Activated CD4-positive, alpha-beta memory T cell treated with anti-CD3 and anti-CD28 coated beads for 36 hours (primary cell): ENCODE measurements at regions of chr1 and their contacts with region 1.

Region 1: GRCh38 chr1:114757455-114758250 is at the start of gene CSDE1:
- DNase-seq: peak; percentile 98
- H3K4me3 Mint-ChIP-seq: peak within 1 kb of the TSS; percentile 98
- H3K27ac Mint-ChIP-seq: peak within 1 kb of the TSS; percentile 100
- H3K4me1 Mint-ChIP-seq: peaks cover 47% of the 10 kb centered on the region
- H3K27me3 Mint-ChIP-seq: no peaks in the 10 kb centered on the region
- total RNA-seq, gene CSDE1: 452 to 464 TPM

Region 2: DNA sequence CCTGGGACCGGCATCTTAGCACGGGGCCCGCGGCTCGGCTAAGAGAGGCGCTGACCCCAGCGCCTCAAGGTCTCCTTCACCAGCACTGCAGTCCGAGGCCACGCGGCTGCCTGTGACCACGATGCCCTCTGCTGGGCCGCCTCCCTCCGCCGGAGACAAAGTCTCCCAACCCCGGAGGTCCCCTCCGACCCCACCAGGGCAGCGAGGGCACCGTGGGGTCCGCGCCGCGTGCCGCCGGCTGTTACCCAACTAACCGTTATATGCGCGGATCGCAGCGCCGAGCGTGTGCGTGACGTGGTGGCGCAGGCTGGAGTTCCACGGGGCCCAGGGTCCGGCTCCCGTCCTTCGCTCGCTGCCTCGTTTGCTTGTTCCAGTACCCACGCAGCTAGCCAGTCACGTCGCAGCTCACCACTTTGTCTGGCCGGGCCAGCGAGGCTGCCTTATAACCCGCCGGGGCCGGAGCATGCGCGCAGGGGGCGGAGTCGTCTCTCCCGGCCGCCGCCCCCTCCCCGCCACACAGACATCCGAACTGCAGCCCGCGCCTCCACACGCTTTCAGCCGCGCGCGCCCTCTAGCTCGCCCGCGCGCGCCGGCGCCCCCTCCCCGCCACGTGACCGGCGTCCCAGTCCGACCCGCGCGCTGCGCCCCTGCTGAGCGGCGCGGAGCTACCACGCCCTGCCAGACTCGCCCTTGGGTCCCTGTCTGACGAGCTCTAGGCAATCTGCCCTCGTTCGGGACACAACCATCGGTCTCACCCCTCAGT is 1801.7 kb before region 1 on chr1 and contains the start of gene SLC16A1:
- CTCF ChIA-PET with region 1: no interaction called
- POLR2A ChIA-PET with region 1: no interaction called
- intact Hi-C with region 1: loop called (anchors 5 kb)
- DNase-seq: peak; percentile 92
- H3K4me3 Mint-ChIP-seq: peak within 1 kb of the TSS; percentile 98
- H3K27ac Mint-ChIP-seq: peak within 1 kb of the TSS; percentile 97
- H3K4me1 Mint-ChIP-seq: peaks cover 58% of the 10 kb centered on the region
- H3K27me3 Mint-ChIP-seq: no peaks in the 10 kb centered on the region
- total RNA-seq, gene SLC16A1: 48.7 to 53.3 TPM

Region 3: DNA sequence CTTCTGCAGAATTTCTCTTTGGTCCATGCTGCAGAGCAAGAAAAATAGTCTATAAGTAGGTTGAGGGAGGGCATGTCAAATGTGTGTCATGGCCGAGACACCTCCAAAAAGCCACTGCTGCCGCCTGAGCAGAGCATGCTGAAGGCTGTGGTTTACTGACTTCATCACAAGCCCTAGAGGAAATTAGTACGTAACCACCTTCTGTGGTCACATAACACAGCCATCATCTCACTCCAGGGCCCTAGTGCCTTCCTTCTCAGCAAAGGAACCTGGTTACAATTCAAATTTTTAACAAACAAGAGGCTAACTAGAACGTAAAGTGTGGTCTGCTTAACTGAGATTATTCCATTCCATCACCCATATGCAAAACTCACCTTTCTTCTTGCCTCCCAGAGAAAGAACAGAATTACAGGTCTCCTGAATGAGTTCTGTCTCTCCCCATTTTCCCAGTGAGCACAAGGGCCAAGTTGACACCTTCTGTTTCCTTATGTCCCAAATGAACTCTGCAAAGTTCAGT is 886.0 kb before region 1 on chr1 and contains the start of gene PTPN22:
- CTCF ChIA-PET with region 1: no interaction called
- POLR2A ChIA-PET with region 1: no interaction called
- intact Hi-C with region 1: loop called (anchors 5 kb)
- DNase-seq: peak; percentile 89
- H3K4me3 Mint-ChIP-seq: peak within 1 kb of the TSS; percentile 80
- H3K27ac Mint-ChIP-seq: peak within 1 kb of the TSS; percentile 97
- H3K4me1 Mint-ChIP-seq: peaks cover 75% of the 10 kb centered on the region
- H3K27me3 Mint-ChIP-seq: no peaks in the 10 kb centered on the region
- total RNA-seq, gene PTPN22: 45.2 to 45.7 TPM

Region 4: DNA sequence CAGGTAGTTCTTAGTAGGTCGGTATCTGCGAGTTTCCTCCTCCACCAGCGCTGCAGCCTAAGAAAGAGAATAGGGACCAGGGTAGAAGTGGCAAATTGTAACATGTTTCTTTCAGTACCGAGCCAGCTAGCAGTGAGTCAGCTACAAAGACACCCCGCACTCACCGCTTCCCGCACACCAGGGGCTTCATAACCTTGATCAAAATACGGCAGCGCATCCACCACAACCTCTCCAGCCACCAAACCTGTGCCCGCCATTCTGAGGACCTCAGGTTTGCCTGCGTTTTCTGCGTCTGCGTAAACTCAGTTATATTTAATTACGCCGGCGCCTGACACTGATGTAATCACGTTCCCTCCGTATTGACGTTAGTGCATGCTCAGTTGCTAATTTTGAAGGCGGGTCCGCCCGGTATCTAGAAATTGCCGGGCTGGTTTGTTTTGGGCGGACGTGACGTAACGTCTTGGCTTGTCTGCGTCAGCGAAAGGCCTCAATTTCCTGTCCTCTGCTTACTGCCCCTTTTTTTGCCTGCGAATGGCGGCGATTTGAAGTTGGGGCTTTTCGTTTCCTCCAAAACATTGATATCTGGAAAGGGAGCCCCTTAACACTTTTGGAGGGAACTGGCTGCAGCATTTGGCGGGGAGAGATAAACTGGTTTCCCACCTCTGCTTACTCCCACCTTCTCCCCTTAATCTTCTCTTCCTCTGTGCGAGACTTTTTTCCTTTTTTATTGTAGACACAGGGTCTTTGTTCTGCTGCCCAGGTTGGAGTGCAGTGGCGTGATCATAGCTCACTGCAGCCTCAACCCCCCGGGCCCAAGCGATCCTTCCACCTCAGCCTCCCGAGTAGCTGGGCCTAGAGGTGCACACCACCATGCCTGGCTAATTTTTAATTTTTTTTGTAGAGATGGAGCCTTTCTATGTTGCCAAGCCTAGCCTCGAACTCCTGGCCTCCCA is 176.0 kb before region 1 on chr1 and contains the start of gene BCAS2:
- CTCF ChIA-PET with region 1: no interaction called
- POLR2A ChIA-PET with region 1: no interaction called
- intact Hi-C with region 1: loop called (anchors 1 kb)
- DNase-seq: peak; percentile 98
- H3K4me3 Mint-ChIP-seq: peak within 1 kb of the TSS; percentile 85
- H3K27ac Mint-ChIP-seq: peak within 1 kb of the TSS; percentile 83
- H3K4me1 Mint-ChIP-seq: peaks cover 29% of the 10 kb centered on the region
- H3K27me3 Mint-ChIP-seq: no peaks in the 10 kb centered on the region
- total RNA-seq, gene BCAS2: 48.5 to 49.0 TPM

Region 5: DNA sequence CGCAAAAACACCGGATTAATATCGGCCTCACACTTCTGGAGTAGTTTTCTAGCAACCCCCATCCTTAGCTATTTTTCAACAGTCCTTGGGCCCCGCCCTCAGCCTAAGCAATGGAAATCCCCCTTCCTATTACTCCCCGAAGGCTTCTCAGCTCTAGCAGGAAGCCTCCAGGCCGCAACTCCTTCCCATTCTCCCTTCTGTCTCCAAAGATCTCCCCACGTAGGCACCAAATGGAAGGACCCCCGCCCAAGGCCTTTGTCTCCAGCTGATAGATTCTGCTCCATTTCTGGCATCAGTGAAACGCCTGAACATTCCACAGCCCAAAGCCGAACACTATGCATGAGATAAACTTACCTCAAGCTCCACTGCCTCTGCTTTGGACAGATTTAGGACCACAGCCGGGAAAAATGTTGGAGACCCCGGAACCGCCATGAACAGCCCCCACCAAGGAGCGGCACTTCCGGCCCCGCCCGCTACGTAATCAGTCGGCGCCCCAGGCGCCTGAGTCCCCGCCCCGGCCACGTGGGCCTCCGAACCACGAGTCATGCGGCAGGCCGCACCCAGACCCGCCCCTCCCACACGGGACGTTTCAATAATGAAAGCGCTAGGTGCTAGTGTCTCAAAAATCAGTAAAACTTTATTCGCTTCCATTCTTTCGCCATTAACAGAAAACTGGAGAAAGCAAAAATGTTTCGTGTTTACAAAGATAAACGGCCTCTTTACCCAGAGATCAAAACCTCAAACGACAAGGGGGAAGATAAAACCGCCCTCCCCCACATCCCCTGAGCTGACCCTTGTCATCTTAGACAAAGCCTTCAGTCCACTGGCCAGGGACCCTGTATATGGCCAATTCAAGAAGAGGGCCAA is 41.1 kb before region 1 on chr1 and contains the start of gene NRAS:
- CTCF ChIA-PET with region 1: interaction called, 5 read pairs
- POLR2A ChIA-PET with region 1: interaction called, 8 read pairs
- intact Hi-C with region 1: loop called (anchors 1 kb)
- DNase-seq: peak; percentile 97
- H3K4me3 Mint-ChIP-seq: peak within 1 kb of the TSS; percentile 91
- H3K27ac Mint-ChIP-seq: peak within 1 kb of the TSS; percentile 97
- H3K4me1 Mint-ChIP-seq: peaks cover 31% of the 10 kb centered on the region
- H3K27me3 Mint-ChIP-seq: no peaks in the 10 kb centered on the region
- total RNA-seq, gene NRAS: 51.7 to 52.1 TPM

Region 6: DNA sequence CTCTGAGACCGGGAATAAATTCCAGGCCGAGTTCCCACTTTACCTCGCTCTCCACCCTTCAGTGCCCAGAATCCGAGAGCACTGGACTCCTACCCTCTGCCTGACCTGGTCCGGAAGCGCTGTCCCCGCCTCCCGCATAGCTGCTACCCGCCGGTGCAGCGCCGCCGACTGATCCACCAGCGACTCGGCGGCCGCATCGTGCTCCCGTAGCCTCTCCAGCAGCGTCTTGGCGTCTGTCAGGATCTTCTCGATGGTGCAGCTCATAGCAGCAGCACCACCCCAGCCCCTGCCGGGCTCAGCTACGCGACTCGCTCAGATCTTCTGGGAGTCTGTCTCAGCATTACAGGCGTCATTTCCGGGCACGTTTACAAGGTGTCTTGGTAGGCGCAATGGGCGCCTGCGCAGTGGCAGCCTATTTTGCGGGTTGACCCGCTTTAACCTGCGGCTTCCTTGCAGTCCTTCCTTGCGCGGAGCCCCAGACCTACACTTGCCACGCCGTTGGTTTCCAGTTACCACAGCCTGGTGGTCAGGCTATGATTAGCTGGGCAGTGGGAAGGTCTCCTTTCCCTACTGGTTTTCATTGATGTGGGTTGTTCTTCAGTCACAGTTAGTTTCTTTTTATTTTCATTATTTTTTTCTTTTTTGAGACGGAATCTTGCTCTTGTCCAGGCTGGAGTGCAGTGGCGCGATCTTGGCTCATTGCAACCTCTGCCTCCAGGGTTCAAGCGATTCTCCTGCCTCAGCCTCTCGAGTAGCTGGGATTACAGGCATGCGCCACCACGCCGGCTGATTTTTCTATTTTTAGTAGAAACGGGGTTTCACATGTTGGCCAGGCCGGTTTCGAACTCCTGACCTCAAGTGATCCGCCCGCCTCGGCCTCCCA is 22.9 kb after region 1 on chr1 and contains the start of gene SIKE1:
- CTCF ChIA-PET with region 1: no interaction called
- POLR2A ChIA-PET with region 1: interaction called, 4 read pairs
- intact Hi-C with region 1: loop called (anchors 1 kb)
- DNase-seq: peak; percentile 97
- H3K4me3 Mint-ChIP-seq: peak within 1 kb of the TSS; percentile 100
- H3K27ac Mint-ChIP-seq: peak within 1 kb of the TSS; percentile 100
- H3K4me1 Mint-ChIP-seq: peaks cover 23% of the 10 kb centered on the region
- H3K27me3 Mint-ChIP-seq: no peaks in the 10 kb centered on the region
- total RNA-seq, gene SIKE1: 60.4 to 66.7 TPM

Region 7: DNA sequence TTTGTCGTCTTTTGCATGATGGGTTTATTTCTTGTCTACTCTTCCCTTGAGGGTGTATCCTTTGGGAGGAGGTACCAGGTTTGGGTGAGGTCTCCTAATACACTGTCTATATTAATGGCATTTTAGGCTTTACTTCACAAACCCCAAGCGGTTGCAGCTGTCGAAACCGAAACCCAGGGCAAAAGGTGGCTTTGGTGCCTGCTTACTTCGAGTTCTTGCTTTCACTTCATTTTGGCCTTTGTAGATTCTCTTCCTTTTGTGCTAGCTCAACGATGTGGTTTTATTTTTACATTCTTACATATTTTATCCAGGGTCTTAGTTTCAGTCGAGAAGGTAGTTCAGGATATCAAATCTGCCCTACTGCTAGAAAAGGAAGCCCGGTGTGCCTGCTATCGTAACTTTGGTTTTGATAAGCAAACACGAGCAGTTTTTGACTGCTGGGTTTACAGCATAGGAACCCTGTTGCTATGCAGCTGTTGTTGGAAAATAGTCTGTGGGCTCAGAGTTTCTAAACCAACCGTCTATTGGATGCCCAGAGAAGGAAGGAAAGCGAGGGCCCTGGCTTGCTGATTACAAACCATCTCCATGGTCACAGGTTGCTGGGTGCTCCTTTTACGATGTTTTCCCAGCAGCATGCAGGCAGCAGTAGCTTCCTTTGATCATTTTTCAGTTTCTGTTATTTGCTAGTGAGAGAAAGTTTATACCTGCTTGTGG is 341.5 kb after region 1 on chr1:
- CTCF ChIA-PET with region 1: no interaction called
- POLR2A ChIA-PET with region 1: no interaction called
- intact Hi-C with region 1: loop called (anchors 1 kb)
- DNase-seq: peak; percentile 78
- H3K4me3 Mint-ChIP-seq: peak overlapping the region; percentile 80
- H3K27ac Mint-ChIP-seq: peak overlapping the region; percentile 85
- H3K4me1 Mint-ChIP-seq: peaks cover 47% of the 10 kb centered on the region
- H3K27me3 Mint-ChIP-seq: no peaks in the 10 kb centered on the region

Region 8: DNA sequence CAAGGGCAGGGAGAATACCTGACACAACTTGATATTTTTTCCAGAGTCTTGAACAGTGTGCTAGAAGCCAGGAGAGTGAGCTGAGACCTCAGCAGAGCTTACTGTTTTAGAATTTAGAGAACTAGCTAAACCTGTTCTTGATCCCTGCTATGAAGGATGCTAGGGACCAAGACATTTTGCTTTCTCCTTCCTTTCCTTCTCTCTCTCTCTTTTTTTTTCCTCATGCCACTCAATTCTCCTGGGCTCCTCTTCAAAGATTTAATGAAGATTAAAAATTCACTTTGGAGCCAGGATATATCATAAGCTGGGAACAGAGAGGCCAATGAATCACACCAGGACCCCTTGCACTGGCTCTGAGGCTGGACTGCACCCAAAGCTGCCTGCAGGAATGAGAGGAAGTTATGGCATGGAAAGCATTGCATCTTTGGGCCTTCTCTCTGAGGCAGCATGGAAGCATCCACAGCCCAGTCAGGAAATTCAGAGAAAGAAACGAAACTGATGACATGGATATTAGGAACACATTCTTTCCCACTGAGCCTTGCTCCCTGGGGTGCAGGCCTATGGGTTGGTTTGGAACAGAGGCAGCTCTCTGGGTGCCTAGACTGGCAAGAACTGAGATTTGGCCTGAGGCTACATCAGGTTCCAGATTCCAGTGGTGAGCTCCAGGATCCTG is 481.6 kb after region 1 on chr1:
- CTCF ChIA-PET with region 1: no interaction called
- POLR2A ChIA-PET with region 1: no interaction called
- intact Hi-C with region 1: no loop called
- DNase-seq: no peak
- H3K4me3 Mint-ChIP-seq: no peak overlapping the region
- H3K27ac Mint-ChIP-seq: no peak overlapping the region
- H3K4me1 Mint-ChIP-seq: no peaks in the 10 kb centered on the region
- H3K27me3 Mint-ChIP-seq: peaks cover 15% of the 10 kb centered on the region